Ascending aorta (tissue), 2 donors: ENCODE measurements at regions of chr4 and their contacts with region 1.

Region 1: DNA sequence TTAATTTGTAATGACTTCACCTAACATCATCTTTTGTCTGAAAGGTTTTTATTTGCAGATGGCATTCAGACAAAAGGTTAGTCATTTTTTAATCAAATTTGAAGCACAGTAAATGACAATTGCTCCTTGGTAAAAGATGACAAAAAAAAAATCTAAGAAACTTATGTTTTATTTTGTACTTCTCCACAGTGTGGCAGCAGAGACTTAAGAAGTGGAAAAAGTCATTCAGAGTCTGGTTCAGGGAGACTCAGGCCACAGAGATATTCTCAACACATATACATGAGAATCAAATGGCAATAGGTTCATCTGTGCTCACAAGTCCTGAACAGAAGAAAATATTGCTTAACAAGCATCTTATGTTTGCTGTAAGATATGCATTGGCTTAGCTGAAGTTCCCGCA is 436.2 kb downstream of the KCNIP4 start:
- DNase-seq: no peak
- H3K4me3 ChIP-seq: no peak overlapping the region
- H3K27ac ChIP-seq: no peak overlapping the region
- H3K4me1 ChIP-seq: no peaks in the 10 kb centered on the region
- H3K27me3 ChIP-seq: no peaks in the 10 kb centered on the region
- CTCF ChIP-seq: peak in 1 of 3 experiments; percentile 6

Region 2: GRCh38 chr4:21304540-21304887 is 207.8 kb before region 1 on chr4:
- intact Hi-C with region 1: no loop called
- DNase-seq: no peak
- H3K4me3 ChIP-seq: no peak overlapping the region
- H3K27ac ChIP-seq: no peak overlapping the region
- H3K4me1 ChIP-seq: no peaks in the 10 kb centered on the region
- H3K27me3 ChIP-seq: no peaks in the 10 kb centered on the region
- CTCF ChIP-seq: no peak

Region 3: GRCh38 chr4:21765810-21766407 is 253.6 kb after region 1 on chr4:
- intact Hi-C with region 1: loop called (anchors 5 kb)
- DNase-seq: no peak
- H3K4me3 ChIP-seq: no peak overlapping the region
- H3K27ac ChIP-seq: no peak overlapping the region
- H3K4me1 ChIP-seq: no peaks in the 10 kb centered on the region
- H3K27me3 ChIP-seq: no peaks in the 10 kb centered on the region
- CTCF ChIP-seq: peak in 2 of 3 experiments; percentile 41 to 62